Activated naive CD8-positive, alpha-beta T cell treated with anti-CD3 and anti-CD28 coated beads, Interleukin-2, amount 10 ng/mL, durations not matched to agents 7 days and 5 days (primary cell): ENCODE measurements at regions of chr17 and their contacts with region 1.

Region 1: GRCh38 chr17:570388-570787 is 144.3 kb downstream of the VPS53 start:
- DNase-seq: no peak
- ATAC-seq: no peak
- H3K4me3 Mint-ChIP-seq: no peak overlapping the region
- H3K27ac Mint-ChIP-seq: no peak overlapping the region
- H3K4me1 Mint-ChIP-seq: peaks cover 6% of the 10 kb centered on the region
- H3K27me3 Mint-ChIP-seq: no peaks in the 10 kb centered on the region

Region 2: DNA sequence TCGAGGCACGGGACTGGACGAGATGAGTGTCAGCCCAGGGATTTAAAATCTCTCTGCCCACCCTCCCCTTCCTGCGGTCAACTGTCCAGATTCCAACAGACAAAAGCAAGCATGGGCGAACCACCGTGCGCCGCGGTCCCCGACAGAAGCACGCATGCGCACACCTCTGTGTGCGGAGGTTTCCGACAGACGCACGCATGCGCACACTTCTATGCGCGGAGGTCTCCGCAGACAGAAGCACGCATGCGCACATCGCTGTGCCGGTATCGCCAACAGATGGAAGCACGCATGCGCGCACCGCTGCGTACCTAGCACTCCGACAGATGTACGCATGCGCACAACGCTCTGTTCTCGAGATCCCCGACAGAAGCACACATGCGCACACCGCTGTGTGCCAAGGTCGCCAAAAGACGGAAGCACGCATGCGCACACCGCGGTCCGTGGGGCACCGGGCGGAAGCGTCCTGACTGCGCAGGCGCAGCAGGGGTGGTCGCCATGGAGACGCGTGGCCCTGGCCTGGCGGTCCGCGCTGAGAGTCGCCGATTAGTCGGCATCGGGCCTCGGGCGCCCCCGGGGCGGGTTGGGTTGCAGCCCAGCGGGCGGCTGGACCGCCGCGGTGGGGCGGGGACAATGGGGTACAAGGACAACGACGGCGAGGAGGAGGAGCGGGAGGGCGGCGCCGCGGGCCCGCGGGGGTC is 160.4 kb before region 1 on chr17:
- POLR2A ChIA-PET with region 1: no interaction called
- DNase-seq: peak; percentile 100
- ATAC-seq: peak; percentile 79
- H3K4me3 Mint-ChIP-seq: peak overlapping the region; percentile 90
- H3K27ac Mint-ChIP-seq: peak overlapping the region; percentile 89
- H3K4me1 Mint-ChIP-seq: peaks cover 44% of the 10 kb centered on the region
- H3K27me3 Mint-ChIP-seq: no peaks in the 10 kb centered on the region

Region 3: DNA sequence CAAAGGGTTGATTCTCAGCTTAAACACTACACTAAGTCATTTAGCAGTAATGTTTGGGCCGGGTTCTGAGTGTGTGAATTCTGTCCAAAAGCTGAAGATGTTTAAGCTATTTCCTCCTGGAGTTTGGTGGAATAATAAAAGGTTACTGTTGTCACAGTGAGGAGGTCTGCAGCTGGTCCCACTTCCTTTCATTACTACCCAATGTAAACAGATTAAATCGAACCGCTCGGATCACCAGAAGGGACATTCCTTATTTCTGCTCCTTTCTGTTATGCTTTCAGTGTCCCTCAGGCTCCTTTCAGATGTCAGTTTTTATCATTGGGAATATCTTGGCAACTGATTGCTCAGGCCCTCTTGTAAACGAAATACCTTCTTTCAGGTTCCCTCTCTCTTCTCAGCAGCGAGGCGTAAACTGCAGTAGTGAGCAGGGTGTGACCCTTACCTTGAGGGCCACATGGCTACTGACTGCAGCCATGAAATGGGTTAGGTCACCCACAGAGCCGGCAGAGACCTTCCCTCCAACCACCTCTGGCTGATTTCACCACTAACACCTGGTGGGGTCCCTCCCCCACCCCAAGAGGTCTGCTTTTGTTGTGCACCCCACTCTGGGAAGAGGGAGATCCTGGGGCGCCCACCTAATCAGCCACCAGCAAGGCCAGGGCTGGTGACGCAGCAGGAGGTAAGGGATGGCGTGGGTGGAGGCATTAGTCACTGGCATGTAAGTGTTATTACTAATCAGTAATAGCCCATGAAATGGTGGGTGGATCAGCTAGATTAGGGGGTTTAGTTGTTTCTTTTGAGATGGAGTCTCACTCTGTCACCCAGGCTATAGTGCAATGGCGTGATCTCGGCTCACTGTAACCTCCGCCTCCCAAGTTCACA is 26.6 kb after region 1 on chr17:
- POLR2A ChIA-PET with region 1: no interaction called
- DNase-seq: no peak
- ATAC-seq: no peak
- H3K4me3 Mint-ChIP-seq: no peak overlapping the region
- H3K27ac Mint-ChIP-seq: no peak overlapping the region
- H3K4me1 Mint-ChIP-seq: no peaks in the 10 kb centered on the region
- H3K27me3 Mint-ChIP-seq: no peaks in the 10 kb centered on the region

Region 4: DNA sequence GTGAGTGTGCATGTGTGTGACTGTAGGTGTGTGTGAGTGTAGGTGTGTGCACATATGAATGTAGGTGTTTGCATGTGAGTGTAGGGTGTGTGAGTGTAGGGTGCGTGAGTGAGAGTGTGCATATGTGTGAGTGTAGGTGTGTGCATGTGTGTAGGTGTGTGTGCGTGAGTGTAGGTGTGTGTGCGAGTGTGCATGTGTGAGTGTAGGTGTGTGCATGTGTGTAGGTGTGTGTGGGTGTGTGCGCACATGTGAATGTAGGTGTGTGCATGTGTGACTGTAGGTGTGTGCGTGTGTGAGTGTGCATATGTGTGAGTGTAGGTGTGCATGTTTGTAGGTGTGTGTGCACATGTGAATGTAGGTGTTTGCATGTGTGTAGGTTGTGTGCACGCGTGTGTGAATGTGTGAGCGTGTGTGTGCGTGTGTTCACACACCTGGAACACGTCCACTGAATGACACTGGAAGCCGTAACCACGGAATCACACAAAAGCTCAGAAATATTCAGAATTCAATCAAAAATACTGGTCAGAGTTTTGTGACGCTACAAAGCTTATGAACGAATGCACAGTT is 242.3 kb after region 1 on chr17:
- POLR2A ChIA-PET with region 1: interaction called, 12 read pairs
- DNase-seq: no peak
- ATAC-seq: no peak
- H3K4me3 Mint-ChIP-seq: no peak overlapping the region
- H3K27ac Mint-ChIP-seq: no peak overlapping the region
- H3K4me1 Mint-ChIP-seq: no peaks in the 10 kb centered on the region
- H3K27me3 Mint-ChIP-seq: peaks cover under 1% of the 10 kb centered on the region